ENCODE measurements at regions of chr16 and their contacts with region 1.

Region 1: DNA sequence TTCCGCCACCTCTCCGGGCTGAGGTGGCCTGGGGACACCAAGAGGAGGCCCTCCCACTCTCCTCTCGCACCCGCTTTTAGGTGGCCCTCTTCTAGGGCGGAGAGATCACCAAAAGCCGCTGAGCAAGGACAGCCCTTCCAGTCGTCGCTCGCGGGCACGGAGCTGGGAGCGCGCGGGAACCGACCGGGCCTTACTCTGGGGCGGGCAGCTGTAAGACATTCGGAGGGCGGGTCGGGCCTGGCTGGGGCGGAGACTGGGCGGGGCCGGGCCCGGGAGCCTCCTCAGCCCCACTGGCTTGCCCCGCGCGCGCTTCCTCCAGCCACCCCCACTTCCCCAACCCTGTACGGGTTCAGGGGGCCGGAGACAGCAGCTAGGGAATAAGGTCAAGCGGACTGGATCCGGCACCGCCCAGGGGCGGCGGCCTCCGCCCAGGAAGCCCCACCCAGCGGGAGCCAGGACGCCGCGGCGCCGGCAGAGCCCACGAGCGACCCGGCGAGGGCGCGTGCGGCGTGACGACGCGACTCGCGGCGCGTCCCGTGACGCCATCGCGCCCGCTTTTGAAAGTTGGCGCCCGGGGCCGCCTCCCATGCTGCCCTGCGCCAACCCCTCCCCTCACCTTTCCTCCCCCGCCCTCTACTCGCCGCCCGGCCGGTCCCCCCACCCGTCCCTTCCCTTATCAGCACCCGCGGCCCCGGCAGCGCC is 351 bp upstream of the CTCF start:
- DNase-seq: peak; percentile 79 to 97 (median 91)

Region 2: GRCh38 chr16:66539623-66540469 is 1022.1 kb before region 1 on chr16:
- intact Hi-C with region 1: no loop called
- DNase-seq: peak in 2 of 42 donors; percentile 9 to 13

Region 3: DNA sequence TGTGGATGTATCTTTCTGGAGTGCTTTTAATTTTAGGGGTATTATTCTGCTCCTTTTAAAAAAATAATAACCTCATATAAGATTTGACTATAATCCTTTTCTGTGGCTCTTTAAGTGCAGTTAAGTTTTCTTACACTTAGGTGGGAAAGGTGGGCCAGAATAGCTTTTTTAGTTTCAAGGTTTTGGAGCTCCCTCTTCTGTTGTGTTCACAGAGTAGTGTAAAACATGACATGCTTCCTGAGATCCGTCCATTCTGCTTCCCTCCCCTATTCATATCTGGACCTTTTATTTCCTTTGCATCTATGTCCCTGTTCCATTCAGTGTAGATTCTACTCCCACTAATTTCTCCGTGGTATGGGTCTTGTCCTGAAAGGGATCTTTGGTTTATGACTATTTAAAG is 222.5 kb before region 1 on chr16:
- intact Hi-C with region 1: no loop called
- DNase-seq: no peak

Region 4: GRCh38 chr16:67447508-67448076 is 114.4 kb before region 1 on chr16:
- intact Hi-C with region 1: no loop called
- DNase-seq: peak in 16 of 42 donors; percentile 19 to 73 (median 40)

Region 5: DNA sequence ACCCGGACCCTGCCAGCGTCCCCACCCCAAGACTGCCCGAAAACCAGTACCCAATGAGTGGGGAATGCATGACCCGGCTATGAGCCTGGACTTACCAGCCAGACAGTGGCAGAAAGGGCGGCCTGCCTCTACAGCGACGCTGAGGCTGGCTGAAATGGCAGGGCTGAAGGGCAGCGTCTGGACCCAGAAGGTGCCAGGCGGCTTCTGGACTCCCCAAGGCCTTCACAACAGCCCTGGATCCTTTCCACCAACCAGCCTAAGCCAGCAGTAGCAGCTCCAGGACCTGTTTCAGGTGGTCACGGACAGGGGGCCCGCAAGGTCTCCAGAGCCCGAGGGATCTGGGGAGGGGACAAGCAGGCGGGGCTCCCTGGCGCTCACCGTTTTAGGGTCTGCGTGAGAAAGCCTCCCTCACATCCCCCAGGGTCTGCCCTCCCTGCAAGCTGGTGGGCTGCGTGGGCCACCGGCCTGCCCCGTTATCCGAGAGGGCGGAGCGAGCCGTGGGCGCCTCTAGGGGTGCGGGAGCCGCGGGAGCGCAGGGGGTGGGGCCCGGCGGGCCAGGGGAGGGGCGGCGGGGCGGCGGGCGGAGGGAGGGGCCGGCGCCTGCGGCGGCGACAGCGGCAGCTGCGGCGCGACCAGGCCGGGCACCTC is 33.6 kb before region 1 on chr16 and contains the start of gene RIPOR1:
- intact Hi-C with region 1: loop called (anchors 5 kb)
- DNase-seq: peak in 39 of 42 donors; percentile 52 to 88 (median 76)

Region 6: DNA sequence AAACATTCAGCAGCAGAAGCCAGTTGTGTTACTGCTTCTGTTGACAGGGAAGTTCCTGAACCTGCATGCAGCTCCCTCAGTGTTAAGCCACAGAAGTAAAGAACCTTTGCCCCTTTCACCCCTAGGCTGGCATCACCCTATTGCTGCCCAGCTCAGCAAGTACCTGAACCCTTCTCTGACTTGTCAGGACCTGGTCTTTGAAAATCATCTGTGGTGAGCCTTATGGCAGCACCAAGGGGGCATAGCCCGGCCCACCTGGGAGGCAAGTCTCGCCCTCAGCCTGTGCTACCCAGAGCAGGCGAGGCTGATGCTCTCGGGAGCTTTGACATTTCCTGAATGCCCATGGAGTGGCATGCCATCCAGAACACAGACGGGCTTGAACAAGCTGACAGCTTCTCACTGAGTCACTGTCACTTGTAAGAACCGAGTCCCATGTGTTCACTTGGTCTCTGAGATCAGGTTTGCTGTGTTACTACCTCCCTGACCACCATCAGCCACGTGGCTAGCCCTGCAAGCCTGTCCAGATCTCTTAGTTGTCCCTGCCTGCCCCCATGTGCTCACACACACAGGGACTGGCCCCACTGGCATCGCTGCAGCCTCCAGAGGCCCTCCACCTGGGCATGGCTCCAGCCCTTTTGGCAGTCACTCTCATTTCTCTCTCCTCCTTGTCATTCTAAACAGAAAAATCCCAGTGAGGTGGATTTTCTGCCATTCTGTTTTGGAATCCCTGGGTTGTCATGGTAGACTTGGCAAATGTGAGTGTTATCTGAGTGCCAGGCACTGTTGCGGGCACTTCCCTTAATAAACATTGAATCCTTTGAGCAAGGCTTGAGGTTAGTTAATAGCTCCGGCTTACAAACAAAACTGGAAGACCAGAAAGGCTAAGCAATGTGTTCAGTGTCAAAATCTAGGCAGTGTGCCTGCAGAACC is 80.1 kb after region 1 on chr16:
- intact Hi-C with region 1: no loop called
- DNase-seq: peak in 37 of 42 donors; percentile 33 to 84 (median 67)

Region 7: DNA sequence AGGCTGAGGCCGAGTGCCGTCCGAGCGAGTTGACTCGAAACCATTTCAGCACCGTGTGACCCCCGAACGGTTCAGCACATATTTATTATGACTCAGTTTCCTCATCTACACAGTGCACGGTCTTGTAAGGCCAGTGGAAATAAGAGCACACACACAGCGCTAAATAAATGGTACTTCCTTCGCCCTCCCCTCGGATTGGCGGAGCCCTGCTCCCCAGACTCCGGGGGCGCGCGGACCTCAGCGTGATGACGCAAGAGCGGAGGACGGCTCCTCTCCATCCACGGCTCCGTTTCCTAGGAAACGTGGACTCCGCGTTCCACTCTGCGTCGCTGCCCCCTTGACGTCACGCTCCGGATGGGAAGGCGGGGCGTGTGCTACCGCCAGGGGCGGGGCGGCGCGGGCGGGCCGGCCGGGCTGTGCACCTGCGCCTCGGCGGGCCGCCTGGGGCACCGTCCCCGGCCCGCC is 98.6 kb after region 1 on chr16 and contains the start of gene PARD6A:
- intact Hi-C with region 1: loop called (anchors 2 kb)
- DNase-seq: peak; percentile 92 to 99 (median 98)